ENCODE measurements at regions of chr12 and their contacts with region 1.

Region 1: DNA sequence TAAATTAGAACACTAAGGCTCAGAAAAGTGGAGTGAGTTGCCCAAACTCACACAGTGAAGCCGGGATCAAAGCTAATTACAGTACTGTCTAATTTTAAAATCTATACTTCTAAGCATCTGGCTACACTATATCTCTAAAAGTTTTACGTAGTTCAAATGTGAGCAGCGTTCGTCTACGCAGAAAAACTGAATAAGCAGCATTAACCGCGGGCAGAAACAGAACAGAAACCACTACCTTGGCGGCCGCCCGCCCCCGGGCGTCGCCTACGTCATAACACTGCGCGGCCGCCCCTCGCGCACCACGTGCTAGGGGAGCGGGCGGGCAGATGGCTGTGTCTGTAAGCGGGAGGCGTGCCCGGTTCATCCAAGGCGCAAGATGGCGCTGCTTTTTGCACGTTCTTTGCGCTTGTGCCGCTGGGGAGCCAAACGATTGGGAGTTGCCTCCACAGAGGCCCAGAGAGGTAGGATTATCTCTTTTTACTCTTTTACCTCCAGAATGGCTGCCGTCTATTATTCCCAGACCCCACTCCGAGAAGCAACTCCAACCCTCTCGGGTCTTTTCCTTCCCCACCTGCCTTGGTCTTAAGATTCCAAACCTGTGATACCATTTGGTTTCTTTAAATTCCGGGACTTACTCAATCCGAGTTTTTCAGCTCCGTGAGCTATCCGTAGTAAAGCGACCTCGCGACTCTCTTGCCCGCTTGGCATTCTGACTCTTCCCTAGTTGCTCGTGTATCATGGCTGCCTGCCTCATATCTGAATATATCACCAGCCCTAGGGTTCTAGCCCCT is at the start of gene SPRYD4:
- DNase-seq: peak; percentile 75
- H3K4me3 ChIP-seq: peak within 1 kb of the TSS; percentile 93
- H3K27ac ChIP-seq: peak within 1 kb of the TSS; percentile 69
- H3K27me3 ChIP-seq: no peaks in the 10 kb centered on the region
- CTCF ChIP-seq: peak; percentile 24; the same call in 1 of the 2 replicates
- polyA plus RNA-seq, gene SPRYD4: 2.0 TPM in 2 replicates

Region 2: DNA sequence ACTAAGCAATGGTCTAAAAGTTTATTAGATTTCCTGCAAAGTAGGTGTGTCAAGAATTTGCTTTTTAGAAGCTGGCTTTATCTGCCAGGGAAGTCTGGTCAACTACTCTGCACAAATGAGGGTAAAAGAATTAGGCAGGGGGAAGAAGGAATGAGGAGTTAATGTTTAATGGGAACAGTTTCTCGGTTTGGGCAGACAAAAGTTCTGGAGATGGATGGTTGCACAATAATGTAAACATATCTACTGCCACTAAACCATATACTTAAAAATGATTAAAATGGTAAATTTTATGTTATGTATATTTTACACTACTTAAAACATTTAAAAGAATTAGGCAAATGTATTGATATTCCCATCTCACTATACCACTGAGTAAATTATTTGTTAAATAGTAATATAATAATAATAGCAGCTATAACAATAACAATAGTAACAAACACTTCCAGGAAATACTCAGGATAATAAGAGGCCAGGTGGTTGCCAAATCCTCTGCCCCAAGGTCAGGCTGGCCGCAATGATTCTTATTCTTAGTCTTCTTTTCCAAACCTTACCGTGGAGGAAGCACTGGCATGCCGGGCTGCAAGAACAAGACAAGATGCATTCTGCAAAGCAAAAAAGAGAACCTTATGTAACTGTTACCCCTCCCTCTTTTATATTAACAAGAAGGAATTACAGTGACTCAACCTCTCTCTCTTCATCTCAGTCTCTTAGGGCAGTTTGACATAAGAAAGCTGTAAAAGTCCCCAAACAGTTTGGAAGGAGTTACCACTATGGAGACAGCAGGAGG is 182.2 kb before region 1 on chr12:
- CTCF ChIA-PET with region 1: interaction called, 21 read pairs
- POLR2A ChIA-PET with region 1: no interaction called
- DNase-seq: no peak
- H3K4me3 ChIP-seq: no peak overlapping the region
- H3K27ac ChIP-seq: no peak overlapping the region
- H3K27me3 ChIP-seq: no peaks in the 10 kb centered on the region
- CTCF ChIP-seq: no peak

Region 3: DNA sequence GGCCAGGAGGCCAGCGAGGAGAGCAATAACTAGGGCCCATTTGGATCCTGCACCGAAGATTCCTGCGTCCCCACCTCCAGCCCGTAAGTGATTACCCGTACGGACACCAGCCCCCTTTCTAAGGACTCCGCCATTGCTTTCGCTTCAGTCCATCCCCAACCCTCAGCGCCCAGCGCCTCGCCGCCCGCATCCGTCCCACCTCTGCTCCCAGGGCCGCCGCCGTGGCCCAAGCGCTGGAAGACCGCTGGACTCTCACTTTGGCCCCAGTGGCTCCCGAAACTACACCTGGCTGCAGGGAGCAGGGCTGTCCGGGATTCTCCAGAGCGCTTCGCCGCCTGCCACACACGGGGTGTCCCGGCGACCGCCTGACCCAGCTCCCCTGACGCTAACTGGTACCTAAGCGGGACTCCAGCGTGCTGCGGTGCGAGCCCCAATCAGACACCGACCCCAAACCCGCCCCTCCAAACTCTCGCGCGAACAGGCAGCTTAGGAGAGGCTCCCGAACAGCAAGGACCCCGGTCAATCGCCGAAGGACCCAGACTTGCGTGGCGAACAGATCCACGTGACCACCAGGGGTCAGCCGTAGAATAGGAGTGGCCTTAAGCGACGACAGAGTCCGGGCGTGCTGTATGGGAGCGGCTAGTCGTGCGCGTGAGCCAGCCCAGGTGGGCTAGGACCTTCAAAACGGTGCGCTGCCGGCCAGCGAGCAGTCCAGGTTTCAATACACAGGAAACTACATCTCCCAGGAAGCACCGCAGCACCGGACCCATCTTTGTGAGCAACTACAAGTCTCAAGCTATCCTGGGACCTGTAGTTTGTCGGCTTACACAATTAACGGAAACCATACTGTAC is 152.6 kb before region 1 on chr12 and contains the start of gene CNPY2:
- CTCF ChIA-PET with region 1: interaction called, 16 read pairs
- POLR2A ChIA-PET with region 1: interaction called, 6 read pairs
- DNase-seq: peak; percentile 88
- H3K4me3 ChIP-seq: peak within 1 kb of the TSS; percentile 96
- H3K27ac ChIP-seq: peak within 1 kb of the TSS; percentile 92
- H3K27me3 ChIP-seq: no peaks in the 10 kb centered on the region
- CTCF ChIP-seq: no peak
- polyA plus RNA-seq, gene CNPY2: 186 and 194 TPM in 2 replicates

Region 4: GRCh38 chr12:56346703-56347102 is 121.7 kb before region 1 on chr12:
- CTCF ChIA-PET with region 1: interaction called, 13 read pairs
- POLR2A ChIA-PET with region 1: interaction called, 3 read pairs
- DNase-seq: no peak
- H3K4me3 ChIP-seq: no peak overlapping the region
- H3K27ac ChIP-seq: no peak overlapping the region
- H3K27me3 ChIP-seq: no peaks in the 10 kb centered on the region
- CTCF ChIP-seq: no peak

Region 5: DNA sequence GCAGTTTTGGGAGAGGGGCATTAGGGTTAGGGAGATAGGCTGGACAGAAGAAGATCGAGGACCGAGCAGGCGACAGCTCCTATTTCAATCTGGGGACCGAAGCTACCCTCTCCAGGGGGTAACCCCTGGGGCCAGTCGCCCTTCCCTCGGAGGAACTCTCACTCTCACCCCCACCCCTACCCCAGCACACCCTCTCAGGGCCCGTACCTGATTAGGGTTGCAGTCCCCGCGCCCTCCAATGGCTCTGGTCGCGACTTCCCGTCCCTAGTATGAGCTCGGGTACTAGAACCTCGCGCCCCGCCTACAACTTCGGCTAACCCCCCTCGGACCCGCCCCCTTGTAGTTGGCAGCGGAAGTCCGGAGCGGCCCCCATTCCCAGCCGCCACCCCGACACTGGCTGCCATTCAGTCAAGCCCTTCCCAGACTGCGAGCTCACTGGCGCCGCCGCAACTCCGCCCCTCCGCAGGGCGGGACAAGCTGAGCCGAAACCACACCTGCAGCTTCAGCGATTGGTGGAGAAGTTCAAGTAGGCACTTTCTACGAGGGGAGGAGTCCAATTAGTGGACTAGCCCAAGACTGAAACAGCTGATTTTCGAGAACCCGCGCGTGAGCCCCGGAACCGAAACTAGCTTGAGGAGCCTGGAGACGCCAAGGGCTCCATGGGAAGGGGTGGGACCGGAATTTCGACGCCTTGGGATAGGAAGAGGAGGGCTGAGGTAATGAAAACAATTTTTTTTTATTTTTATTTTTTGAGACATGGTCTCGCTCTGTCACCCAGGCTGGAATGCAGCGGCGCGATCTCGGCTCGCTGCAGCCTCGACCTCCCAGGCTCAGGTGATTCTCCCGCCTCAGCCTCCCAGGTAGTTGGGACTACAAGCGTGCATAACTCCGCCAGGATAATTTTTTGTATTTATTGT is 108.3 kb before region 1 on chr12 and contains the start of gene STAT2:
- CTCF ChIA-PET with region 1: interaction called, 54 read pairs
- POLR2A ChIA-PET with region 1: interaction called, 4 read pairs
- DNase-seq: peak; percentile 100
- H3K4me3 ChIP-seq: peak within 1 kb of the TSS; percentile 98
- H3K27ac ChIP-seq: peak within 1 kb of the TSS; percentile 94
- H3K27me3 ChIP-seq: no peaks in the 10 kb centered on the region
- CTCF ChIP-seq: no peak
- polyA plus RNA-seq, gene STAT2: 179 and 193 TPM in 2 replicates

Region 6: DNA sequence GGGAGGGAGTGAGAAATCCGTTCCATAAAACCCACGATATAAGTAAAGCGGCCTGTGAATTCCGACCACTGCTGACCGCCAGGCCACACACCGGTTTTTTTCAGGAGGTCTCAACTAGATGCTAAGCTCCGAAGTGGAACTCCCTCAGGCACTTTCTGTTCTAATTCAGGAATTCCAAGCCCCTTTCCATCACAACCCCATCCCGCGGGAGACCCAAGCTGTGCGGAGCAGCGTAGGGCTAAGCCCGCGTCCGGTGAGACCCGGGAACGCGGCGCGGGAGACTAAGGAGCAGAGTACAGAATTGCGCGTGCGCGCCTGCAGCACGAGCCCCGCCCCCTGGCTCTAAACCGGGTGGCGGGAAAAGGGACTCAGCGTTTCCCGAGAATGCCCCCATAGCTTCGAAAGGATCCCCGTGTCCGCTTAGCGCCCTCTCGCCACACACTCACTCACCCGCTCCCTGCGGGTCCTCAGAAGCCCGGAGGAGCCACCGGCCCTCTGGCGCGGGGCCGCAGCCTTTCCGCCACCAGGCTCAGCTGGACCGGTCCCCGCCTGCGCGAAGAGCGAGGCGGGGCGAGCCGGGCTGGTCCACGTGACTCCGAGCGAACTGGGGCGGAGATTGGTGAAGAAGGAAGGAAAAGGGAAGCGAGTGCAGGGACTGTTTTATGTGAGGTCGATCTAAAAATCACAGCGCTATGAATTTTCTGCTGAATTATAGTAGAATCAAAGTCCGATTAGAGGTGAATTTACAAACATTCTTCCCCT is 19.4 kb before region 1 on chr12 and contains the start of gene TIMELESS:
- CTCF ChIA-PET with region 1: interaction called, 24 read pairs
- POLR2A ChIA-PET with region 1: interaction called, 5 read pairs
- DNase-seq: peak; percentile 51
- H3K4me3 ChIP-seq: peak within 1 kb of the TSS; percentile 83
- H3K27ac ChIP-seq: peak within 1 kb of the TSS; percentile 68
- H3K27me3 ChIP-seq: peaks cover 8% of the 10 kb centered on the region
- CTCF ChIP-seq: peak; percentile 12; the same call in 1 of the 2 replicates
- polyA plus RNA-seq, gene TIMELESS: 2.0 and 3.3 TPM in 2 replicates

Region 7: DNA sequence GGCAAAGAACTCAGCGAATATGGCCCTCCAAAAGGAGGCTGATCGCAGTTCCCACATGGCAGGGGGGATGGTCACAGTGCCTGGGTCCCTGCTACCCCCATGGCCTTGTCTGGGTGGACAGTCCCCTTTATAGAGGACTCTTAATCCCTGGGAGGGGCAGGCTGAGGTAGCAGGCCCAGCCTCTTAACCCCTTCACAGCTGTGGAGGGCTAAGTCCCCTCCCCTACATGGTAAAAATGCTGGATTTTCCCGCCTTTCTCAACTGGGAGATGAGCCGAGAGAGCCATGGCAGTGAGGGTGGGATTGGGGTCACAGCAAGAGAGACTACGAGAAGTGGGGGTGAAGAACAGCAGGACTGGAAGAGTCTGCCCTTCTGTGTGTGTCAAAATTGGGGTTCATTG is 13.9 kb before region 1 on chr12 and contains the start of gene MIP:
- CTCF ChIA-PET with region 1: interaction called, 24 read pairs
- POLR2A ChIA-PET with region 1: interaction called, 5 read pairs
- DNase-seq: no peak
- H3K4me3 ChIP-seq: no peak within 1 kb of the TSS
- H3K27ac ChIP-seq: no peak within 1 kb of the TSS
- H3K27me3 ChIP-seq: peaks cover 20% of the 10 kb centered on the region
- CTCF ChIP-seq: no peak
- polyA plus RNA-seq, gene MIP: not detected in 2 replicates